Lower leg skin (tissue), 4 donors: ENCODE measurements at regions of chr1 and their contacts with region 1.

Region 1: GRCh38 chr1:18091660-18092446 is 15.7 kb upstream of the IGSF21 start:
- DNase-seq: no peak
- H3K4me3 ChIP-seq: no peak overlapping the region
- CTCF ChIP-seq: no peak
- POLR2A ChIP-seq: no peak

Region 2: DNA sequence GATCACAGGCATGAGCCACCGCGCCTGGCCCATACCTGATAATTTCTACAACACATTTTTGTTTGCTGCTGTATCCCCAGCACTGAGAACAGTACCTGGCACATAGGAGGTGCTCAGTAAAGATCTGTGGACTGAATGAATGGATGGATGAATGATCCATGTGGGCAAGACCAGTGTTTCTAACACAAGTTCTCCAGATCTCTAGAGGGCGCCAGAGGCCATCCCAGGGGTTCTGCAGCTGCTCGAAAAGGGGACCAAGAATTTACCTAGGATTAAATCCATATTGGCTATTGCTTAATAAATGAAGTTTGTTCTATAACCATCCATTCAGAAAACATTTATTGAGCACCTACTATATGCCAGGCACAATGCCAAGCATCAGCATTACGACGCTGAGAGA is 169.0 kb before region 1 on chr1:
- intact Hi-C with region 1: loop called (anchors 10 kb)
- DNase-seq: peak; percentile 18 to 53
- H3K4me3 ChIP-seq: no peak overlapping the region
- CTCF ChIP-seq: no peak
- POLR2A ChIP-seq: no peak

Region 3: GRCh38 chr1:18575620-18576019 is 483.8 kb after region 1 on chr1:
- intact Hi-C with region 1: loop called (anchors 10 kb)
- DNase-seq: peak in 1 of 2 donors; percentile 92
- H3K4me3 ChIP-seq: no peak overlapping the region
- CTCF ChIP-seq: no peak
- POLR2A ChIP-seq: no peak